ENCODE measurements at regions of chr6 and their contacts with region 1.

Region 1: GRCh38 chr6:132483779-132484679 is 28.9 kb downstream of the STX7 start:
- DNase-seq: no peak

Region 2: DNA sequence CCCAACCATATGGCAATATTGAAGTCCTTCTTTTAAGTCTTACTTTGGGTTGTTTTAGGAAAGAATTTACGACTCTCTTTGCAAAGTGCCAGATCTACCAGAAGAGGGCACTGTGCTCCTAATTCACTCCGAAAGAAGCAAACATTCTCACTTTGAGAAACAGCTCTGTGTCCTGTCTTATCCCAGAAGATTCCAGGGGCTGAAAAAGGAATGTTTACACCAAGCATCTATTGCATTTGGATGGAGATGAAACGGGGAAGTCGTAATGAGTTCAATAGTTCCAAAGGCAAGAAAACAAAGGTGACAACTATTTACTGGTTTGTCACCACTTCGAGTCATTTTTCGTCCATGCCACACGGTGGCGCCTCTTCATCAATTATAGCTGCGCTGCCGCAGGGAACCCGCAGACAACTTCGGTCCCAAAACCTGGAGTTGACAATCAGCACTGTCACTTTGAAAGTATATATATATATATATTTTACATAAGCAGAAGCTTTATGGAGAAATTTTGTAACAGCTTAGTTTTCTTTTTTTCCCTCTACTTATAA is 204.4 kb before region 1 on chr6:
- intact Hi-C with region 1: loop called (anchors 10 kb)
- DNase-seq: peak; percentile 90

Measured in posterior vena cava (tissue), 2 donors.